MCF 10A (cell line): ENCODE measurements at regions of chr21 and their contacts with region 1.

Region 1: DNA sequence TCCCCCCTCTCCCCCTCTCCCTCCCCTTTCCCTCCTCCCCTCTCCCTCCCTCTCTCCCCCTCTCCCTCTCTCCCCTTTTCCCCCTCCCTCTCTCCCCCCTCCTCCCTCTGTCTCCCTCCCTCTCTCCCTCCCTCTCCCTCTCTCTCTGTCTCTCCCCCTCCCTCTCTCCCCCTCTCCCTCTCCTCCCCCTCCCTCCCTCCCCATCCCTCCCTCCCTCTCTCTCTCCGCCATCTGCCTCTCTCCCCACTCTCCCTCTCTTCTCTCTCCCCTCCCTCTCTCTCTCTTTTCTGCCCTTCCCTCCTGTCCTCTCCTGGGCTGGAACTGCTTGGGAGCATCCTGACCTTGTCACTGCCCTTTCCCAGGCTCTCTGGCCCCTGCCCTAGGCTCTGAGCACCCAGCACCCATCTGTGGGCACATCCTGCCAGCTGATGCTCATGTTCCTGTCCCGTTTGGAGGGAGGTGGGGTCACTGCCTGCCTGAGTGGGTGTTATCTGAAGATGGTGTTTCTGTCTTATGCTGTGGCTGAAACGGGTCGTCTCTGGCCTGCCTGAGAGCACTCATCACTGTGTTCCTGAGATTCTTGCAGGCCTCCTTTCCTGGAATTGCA is 10.8 kb downstream of the FTCD start:
- DNase-seq: no peak
- H3K4me3 Mint-ChIP-seq: no peak overlapping the region
- H3K27ac Mint-ChIP-seq: no peak overlapping the region
- H3K4me1 Mint-ChIP-seq: peaks cover 7% of the 10 kb centered on the region
- H3K27me3 Mint-ChIP-seq: peaks cover 13% of the 10 kb centered on the region
- CTCF ChIP-seq: no peak

Region 2: DNA sequence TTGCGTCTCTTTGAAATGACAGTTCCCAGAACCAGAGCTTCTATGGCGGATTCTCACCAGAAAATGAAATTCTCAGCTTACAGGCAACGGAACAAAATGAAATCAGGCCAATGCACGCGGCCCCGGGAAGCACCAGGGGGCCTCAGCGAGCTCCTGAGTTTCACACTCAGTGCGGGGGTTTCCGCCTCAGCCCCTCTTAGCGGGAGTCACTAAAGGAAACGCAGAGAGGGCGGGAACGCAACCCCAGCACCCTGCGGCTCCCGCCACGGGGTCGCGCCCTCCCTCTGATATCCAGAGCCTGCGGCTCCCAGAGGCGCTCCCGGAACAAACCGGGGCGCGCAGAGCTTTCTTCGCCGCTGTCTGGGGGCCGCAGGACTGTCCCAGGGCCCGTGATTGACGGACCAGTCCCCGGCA is 170.9 kb before region 1 on chr21:
- CTCF ChIA-PET with region 1: interaction called, 8 read pairs
- POLR2A ChIA-PET with region 1: no interaction called
- intact Hi-C with region 1: loop called (anchors 5 kb)
- DNase-seq: peak; percentile 49
- H3K4me3 Mint-ChIP-seq: peak overlapping the region; percentile 54
- H3K27ac Mint-ChIP-seq: no peak overlapping the region
- H3K4me1 Mint-ChIP-seq: no peaks in the 10 kb centered on the region
- H3K27me3 Mint-ChIP-seq: peaks cover 14% of the 10 kb centered on the region
- CTCF ChIP-seq: peak; percentile 47

Region 3: GRCh38 chr21:46160907-46161632 is 16.5 kb after region 1 on chr21:
- CTCF ChIA-PET with region 1: interaction called, 11 read pairs
- POLR2A ChIA-PET with region 1: no interaction called
- intact Hi-C with region 1: no loop called
- DNase-seq: no peak
- H3K4me3 Mint-ChIP-seq: no peak overlapping the region
- H3K27ac Mint-ChIP-seq: no peak overlapping the region
- H3K4me1 Mint-ChIP-seq: peaks cover 5% of the 10 kb centered on the region
- H3K27me3 Mint-ChIP-seq: no peaks in the 10 kb centered on the region
- CTCF ChIP-seq: no peak

Region 4: DNA sequence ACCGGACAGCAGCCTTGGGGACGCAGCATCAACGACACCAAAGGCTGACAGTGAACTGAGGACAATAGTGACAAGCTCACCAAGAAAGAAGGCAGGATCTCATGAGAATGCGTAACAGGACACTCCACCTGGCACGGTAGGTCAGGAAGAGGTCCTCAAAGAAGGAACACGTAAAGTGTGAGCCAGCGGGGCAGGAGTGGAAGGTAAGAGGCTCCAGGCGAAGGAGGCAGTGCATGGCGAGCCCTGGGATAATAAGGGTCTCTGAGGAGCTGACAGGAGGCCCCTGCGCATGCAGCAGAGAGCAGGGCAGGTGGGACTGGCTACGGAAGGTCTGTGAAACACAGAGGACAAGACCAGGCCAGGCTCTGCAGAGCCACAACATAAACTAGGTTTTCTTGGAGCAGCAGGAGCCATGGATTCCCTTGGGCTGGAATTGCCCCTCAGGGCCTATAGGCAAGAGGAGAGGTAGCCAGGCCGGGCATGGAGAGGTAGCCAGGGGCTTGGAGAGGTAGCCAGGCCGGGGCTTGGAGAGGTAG is 75.8 kb after region 1 on chr21:
- CTCF ChIA-PET with region 1: no interaction called
- POLR2A ChIA-PET with region 1: no interaction called
- intact Hi-C with region 1: no loop called
- DNase-seq: no peak
- H3K4me3 Mint-ChIP-seq: no peak overlapping the region
- H3K27ac Mint-ChIP-seq: peak overlapping the region; percentile 74
- H3K4me1 Mint-ChIP-seq: peaks cover 18% of the 10 kb centered on the region
- H3K27me3 Mint-ChIP-seq: no peaks in the 10 kb centered on the region
- CTCF ChIP-seq: no peak

Region 5: DNA sequence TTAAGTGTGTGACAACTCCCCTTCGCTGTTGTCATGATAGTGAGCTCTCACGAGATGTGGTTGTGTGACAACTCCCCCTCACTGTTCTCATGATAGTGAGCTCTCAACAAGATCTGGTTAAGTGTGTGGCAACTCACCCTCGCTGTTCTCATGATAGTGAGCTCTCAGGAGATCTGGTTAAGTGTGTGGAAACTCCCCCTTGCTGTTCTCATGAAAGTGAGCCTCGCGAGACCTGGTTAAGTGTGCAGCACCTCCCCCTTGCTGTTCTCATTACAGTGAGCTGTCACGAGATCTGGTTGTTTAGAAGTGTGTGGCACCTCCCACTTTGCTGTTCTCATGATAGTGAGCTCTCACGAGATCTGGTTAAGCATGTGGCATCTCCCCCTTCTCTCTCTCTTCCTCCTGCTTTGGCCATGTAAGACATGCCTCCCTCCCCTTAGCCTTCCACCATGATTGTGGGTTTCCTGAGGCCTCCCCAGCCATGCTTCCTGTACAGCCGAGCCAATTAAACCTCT is 109.1 kb after region 1 on chr21:
- CTCF ChIA-PET with region 1: no interaction called
- POLR2A ChIA-PET with region 1: no interaction called
- intact Hi-C with region 1: no loop called
- DNase-seq: no peak
- H3K4me3 Mint-ChIP-seq: no peak overlapping the region
- H3K27ac Mint-ChIP-seq: no peak overlapping the region
- H3K4me1 Mint-ChIP-seq: peaks cover 11% of the 10 kb centered on the region
- H3K27me3 Mint-ChIP-seq: no peaks in the 10 kb centered on the region
- CTCF ChIP-seq: no peak